IMR-90 (cell line): ENCODE measurements at regions of chr3 and their contacts with region 1.

Region 1: GRCh38 chr3:73508330-73508954 is 116.3 kb downstream of the PDZRN3 start:
- DNase-seq: peak; percentile 81
- ATAC-seq: peak; percentile 41
- H3K4me3 ChIP-seq: no peak overlapping the region
- H3K27ac ChIP-seq: peak overlapping the region; percentile 45; the same call in 1 of the 2 replicates
- H3K4me1 ChIP-seq: peaks cover 37% of the 10 kb centered on the region
- H3K27me3 ChIP-seq: no peaks in the 10 kb centered on the region
- CTCF ChIP-seq: peak; percentile 73
- POLR2A ChIP-seq: no peak
- RAD21 ChIP-seq: peak; percentile 83

Region 2: DNA sequence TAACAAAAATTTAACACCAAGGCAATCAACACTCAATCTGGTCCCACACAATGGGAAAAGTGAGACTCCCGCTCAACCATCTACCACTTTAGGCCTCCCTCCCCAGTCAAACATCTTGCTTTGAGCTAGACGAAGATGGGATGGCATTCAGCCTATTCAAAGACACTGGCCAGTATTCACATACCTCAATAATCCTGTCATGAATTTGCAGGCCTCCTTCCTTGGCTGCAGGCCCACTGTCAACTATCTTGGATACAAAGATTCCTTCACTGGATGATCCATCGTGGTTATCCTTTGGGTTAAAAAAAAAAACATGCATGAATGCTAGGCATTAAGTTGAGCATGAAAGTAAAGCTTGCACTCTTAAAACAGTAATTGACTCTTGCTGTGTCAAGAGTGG is 93.7 kb after region 1 on chr3:
- CTCF ChIA-PET with region 1: interaction called, 4 read pairs
- POLR2A ChIA-PET with region 1: no interaction called
- dilution Hi-C with region 1: loop called (anchors 25 kb)
- in situ Hi-C with region 1: loop called (anchors 25 kb)
- intact Hi-C with region 1: loop called (anchors 5 kb)
- DNase-seq: peak; percentile 94
- ATAC-seq: peak; percentile 56
- H3K4me3 ChIP-seq: no peak overlapping the region
- H3K27ac ChIP-seq: no peak overlapping the region
- H3K4me1 ChIP-seq: peaks cover 16% of the 10 kb centered on the region
- H3K27me3 ChIP-seq: no peaks in the 10 kb centered on the region
- CTCF ChIP-seq: no peak
- POLR2A ChIP-seq: no peak
- RAD21 ChIP-seq: no peak

Region 3: GRCh38 chr3:73727117-73727821 is 218.8 kb after region 1 on chr3:
- CTCF ChIA-PET with region 1: no interaction called
- POLR2A ChIA-PET with region 1: no interaction called
- dilution Hi-C with region 1: no loop called
- in situ Hi-C with region 1: no loop called
- intact Hi-C with region 1: loop called (anchors 5 kb)
- DNase-seq: peak; percentile 83
- ATAC-seq: peak; percentile 86
- H3K4me3 ChIP-seq: no peak overlapping the region
- H3K27ac ChIP-seq: peak overlapping the region; percentile 82; the same call in 1 of the 2 replicates
- H3K4me1 ChIP-seq: peaks cover 11% of the 10 kb centered on the region
- H3K27me3 ChIP-seq: no peaks in the 10 kb centered on the region
- CTCF ChIP-seq: no peak
- POLR2A ChIP-seq: no peak
- RAD21 ChIP-seq: no peak

Region 4: DNA sequence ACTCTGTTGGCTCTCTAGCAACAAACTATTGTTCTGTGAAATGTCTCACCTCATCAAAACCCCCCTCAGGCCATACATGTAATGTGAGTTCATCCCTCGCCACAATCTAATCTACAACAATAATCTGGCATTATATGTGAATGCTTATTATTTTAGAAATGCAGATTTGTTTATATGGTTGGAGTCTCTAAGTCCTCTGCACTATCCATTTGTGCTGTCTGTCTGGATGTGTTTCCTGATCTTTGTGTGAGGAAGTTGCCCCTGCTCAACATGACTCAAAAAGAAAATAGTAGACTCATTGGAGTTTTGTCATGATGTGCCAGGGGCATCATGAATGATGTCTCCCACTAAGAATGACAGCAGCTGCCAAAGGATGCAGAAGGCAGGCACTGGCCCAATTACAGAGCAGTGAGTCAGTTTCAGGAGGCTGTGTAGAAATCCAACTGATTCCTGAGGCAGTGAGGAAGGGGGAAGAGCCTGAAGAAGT is 277.9 kb after region 1 on chr3:
- CTCF ChIA-PET with region 1: no interaction called
- POLR2A ChIA-PET with region 1: no interaction called
- dilution Hi-C with region 1: no loop called
- in situ Hi-C with region 1: loop called (anchors 10 kb)
- intact Hi-C with region 1: no loop called
- DNase-seq: peak; percentile 97
- ATAC-seq: peak; percentile 90
- H3K4me3 ChIP-seq: no peak overlapping the region
- H3K27ac ChIP-seq: peak overlapping the region; percentile 16; the same call in 1 of the 2 replicates
- H3K4me1 ChIP-seq: 0 out of 2 replicates have a peak, but pooled peaks cover 2% of the 10 kb centered on the region
- H3K27me3 ChIP-seq: no peaks in the 10 kb centered on the region
- CTCF ChIP-seq: no peak
- POLR2A ChIP-seq: no peak
- RAD21 ChIP-seq: no peak